Transverse colon (tissue), 4 donors: ENCODE measurements at regions of chr10 and their contacts with region 1.

Region 1: DNA sequence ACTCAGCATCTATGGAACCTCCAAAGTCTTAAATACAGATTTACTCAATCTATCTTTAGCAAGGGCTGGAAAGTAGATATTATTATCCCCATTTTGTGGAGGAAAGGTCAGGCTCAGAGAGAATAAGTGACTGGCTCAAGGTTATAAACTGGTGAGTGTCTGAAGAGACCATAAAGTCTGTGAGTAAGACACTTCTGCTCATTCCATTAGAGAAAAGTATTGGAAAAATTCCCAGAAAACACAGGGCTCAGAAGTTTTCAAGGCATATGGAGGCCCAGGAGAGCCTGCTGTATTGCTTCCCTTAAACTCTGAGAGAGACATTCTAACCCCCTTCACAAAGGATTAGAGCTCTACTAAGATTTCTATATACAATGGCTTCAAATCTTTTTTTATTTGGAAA is 134.8 kb downstream of the PCDH15 start:
- DNase-seq: no peak
- H3K4me3 ChIP-seq: no peak overlapping the region
- H3K27ac ChIP-seq: no peak overlapping the region
- H3K4me1 ChIP-seq: no peaks in the 10 kb centered on the region
- H3K27me3 ChIP-seq: no peaks in the 10 kb centered on the region
- CTCF ChIP-seq: no peak
- EP300 ChIP-seq: no peak
- POLR2A ChIP-seq: no peak

Region 2: GRCh38 chr10:55063811-55064210 is 397.6 kb after region 1 on chr10:
- in situ Hi-C with region 1: no loop called
- intact Hi-C with region 1: no loop called
- DNase-seq: no peak
- H3K4me3 ChIP-seq: no peak overlapping the region
- H3K27ac ChIP-seq: no peak overlapping the region
- H3K4me1 ChIP-seq: no peaks in the 10 kb centered on the region
- H3K27me3 ChIP-seq: no peaks in the 10 kb centered on the region
- CTCF ChIP-seq: no peak
- EP300 ChIP-seq: no peak
- POLR2A ChIP-seq: no peak

Region 3: DNA sequence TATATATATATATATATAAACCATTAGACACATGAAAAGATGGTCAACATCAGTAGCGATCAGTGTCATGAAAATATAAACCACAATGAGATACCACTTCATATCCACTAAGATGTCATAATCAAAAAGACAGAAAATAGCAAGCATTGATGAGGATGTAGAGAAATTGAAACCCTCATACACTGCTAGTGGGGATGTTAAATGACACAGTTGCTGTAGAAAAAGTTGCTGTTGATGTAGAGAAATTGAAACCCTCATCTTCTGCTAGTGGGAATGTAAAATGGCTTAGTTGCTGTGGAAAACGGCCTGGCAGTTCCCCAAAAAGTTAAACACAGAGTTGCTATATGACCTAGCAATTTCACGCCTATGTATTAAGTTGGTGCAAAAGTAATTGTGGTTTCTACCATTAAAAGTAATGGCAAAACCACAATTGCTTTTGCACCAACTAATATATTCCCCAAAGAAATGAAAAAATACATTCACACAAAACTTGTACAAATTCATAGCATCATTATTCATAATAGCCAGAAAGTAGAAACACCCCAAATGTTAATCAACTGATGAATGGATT is 1815.4 kb after region 1 on chr10:
- in situ Hi-C with region 1: no loop called
- intact Hi-C with region 1: loop called (anchors 5 kb)
- DNase-seq: no peak
- H3K4me3 ChIP-seq: no peak overlapping the region
- H3K27ac ChIP-seq: no peak overlapping the region
- H3K4me1 ChIP-seq: no peaks in the 10 kb centered on the region
- H3K27me3 ChIP-seq: no peaks in the 10 kb centered on the region
- CTCF ChIP-seq: no peak
- EP300 ChIP-seq: no peak
- POLR2A ChIP-seq: no peak